CD8-positive, alpha-beta T cell (primary cell): ENCODE measurements at regions of chr3 and their contacts with region 1.

Region 1: DNA sequence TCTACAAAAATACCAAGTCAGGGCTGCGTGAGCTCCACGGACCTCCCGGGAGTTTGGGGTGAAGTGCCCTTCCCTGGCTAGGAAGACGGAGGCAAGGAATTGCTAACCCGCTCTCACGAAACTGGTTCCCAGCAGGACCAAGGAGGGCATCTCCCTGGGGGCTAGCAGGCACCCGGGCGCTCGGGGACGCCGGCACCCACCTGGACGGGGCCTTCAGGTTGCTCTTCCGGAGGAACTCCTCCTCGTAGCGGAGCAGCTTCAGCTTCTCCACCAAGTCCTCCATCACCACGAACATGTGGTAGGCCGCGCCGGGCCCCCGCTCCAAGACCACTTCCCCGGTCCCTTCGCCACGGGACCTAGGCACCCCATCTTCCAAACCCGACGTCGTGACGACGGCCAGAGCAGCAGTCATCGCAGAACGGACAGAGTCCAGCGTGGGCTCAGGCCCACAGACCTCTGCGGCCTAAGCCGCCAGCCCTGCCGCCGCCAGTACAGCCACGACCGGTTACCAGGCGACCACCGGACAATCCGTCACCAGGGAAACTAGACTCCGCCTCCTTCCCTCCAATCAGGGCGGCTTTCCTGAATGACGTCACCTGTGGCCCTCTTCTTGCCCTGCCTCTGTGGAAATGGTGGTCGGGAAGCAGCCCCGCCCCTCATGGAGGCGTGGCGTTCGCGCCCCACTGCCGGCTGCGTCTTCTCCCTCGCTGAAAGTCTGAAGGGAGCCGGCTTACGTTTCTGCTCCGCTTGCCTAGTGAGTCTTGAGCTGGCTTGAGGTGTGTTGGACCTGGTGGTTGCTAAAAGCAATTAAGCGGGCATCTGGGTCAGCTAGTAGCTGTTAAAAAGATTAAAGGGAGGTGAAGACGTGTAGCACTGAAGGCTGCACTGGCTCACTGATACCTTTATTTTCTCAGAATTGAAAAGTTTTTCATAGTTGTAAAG is at the start of gene IFT57:
- DNase-seq: peak; percentile 89 to 99 (median 95)
- ATAC-seq: peak; percentile 94
- H3K4me3 ChIP-seq: peak within 1 kb of the TSS; percentile 73 to 94
- H3K4me3 Mint-ChIP-seq: peak within 1 kb of the TSS; percentile 97
- H3K27ac ChIP-seq: peak within 1 kb of the TSS; percentile 96 to 97
- H3K27ac Mint-ChIP-seq: peak within 1 kb of the TSS; percentile 98
- H3K4me1 ChIP-seq: peaks cover 41% of the 10 kb centered on the region
- H3K4me1 Mint-ChIP-seq: peaks cover 53% of the 10 kb centered on the region
- H3K27me3 ChIP-seq: no peaks in the 10 kb centered on the region
- H3K27me3 Mint-ChIP-seq: no peaks in the 10 kb centered on the region
- CTCF ChIP-seq: no peak
- total RNA-seq, gene IFT57: 45.2 to 55.7 TPM

Region 2: GRCh38 chr3:107522510-107523288 is 699.5 kb before region 1 on chr3 and contains the start of gene BBX:
- CTCF ChIA-PET with region 1: no interaction called
- POLR2A ChIA-PET with region 1: interaction called, 3 read pairs
- intact Hi-C with region 1: loop called (anchors 2 to 10 kb)
- DNase-seq: peak; percentile 83 to 98 (median 91)
- ATAC-seq: peak; percentile 91
- H3K4me3 ChIP-seq: peak within 1 kb of the TSS; percentile 77 to 86
- H3K4me3 Mint-ChIP-seq: peak within 1 kb of the TSS; percentile 99
- H3K27ac ChIP-seq: peak within 1 kb of the TSS; percentile 47 to 69
- H3K27ac Mint-ChIP-seq: peak within 1 kb of the TSS; percentile 99
- H3K4me1 ChIP-seq: peaks cover 19% of the 10 kb centered on the region
- H3K4me1 Mint-ChIP-seq: peaks cover 32% of the 10 kb centered on the region
- H3K27me3 ChIP-seq: no peaks in the 10 kb centered on the region
- H3K27me3 Mint-ChIP-seq: no peaks in the 10 kb centered on the region
- CTCF ChIP-seq: no peak
- total RNA-seq, gene BBX: 71.3 to 77.9 TPM

Region 3: DNA sequence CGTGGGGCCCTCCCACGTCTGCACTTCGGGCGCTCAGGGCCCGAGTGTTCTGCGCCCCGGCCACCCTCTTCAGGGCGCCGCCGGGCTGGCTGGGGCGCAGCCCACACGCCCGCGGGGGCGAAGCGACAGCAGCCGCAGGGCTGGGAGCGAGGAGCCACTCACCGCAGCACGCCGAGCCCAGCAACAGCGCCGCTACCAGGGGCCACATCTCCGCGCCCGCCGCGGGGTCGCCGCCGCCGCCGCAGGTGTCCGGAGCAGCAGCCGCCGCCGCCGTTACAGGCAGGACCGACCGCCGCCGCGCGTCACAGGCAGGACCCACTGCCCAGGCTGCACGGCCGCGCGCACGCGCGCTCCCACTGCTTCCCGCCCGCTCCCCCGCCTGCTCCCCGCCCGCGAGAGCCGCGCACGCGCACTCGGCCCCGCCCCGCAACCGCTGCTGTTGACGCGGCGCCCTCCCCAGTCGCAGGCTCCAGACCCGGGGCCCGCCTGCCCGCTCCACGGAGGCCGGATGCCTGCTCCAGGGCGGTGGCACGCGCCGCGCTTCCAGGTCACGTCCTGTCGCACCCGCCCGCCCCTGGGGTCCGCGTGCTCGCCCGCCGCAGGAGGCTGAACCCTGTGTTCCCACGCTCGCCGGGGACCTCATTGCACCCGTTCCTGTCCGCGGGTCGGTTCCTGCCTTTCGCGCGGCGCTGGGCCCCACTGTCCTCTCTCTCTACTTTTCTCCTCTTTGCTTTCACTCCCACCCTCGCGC is 131.3 kb before region 1 on chr3 and contains the start of gene CD47:
- CTCF ChIA-PET with region 1: no interaction called
- POLR2A ChIA-PET with region 1: interaction called, 46 read pairs
- intact Hi-C with region 1: loop called (anchors 1 kb)
- DNase-seq: peak; percentile 93 to 99 (median 97)
- ATAC-seq: peak; percentile 70
- H3K4me3 ChIP-seq: peak within 1 kb of the TSS; percentile 91 to 93
- H3K4me3 Mint-ChIP-seq: peak within 1 kb of the TSS; percentile 98
- H3K27ac ChIP-seq: peak within 1 kb of the TSS; percentile 93 to 94
- H3K27ac Mint-ChIP-seq: peak within 1 kb of the TSS; percentile 99
- H3K4me1 ChIP-seq: peaks cover 51% of the 10 kb centered on the region
- H3K4me1 Mint-ChIP-seq: peaks cover 39% of the 10 kb centered on the region
- H3K27me3 ChIP-seq: no peaks in the 10 kb centered on the region
- H3K27me3 Mint-ChIP-seq: no peaks in the 10 kb centered on the region
- CTCF ChIP-seq: no peak
- total RNA-seq, gene CD47: 118 to 125 TPM

Region 4: GRCh38 chr3:108250626-108251025 is 28.4 kb after region 1 on chr3:
- CTCF ChIA-PET with region 1: no interaction called
- POLR2A ChIA-PET with region 1: no interaction called
- intact Hi-C with region 1: no loop called
- DNase-seq: no peak
- ATAC-seq: no peak
- H3K4me3 ChIP-seq: no peak overlapping the region
- H3K4me3 Mint-ChIP-seq: no peak overlapping the region
- H3K27ac ChIP-seq: no peak overlapping the region
- H3K27ac Mint-ChIP-seq: no peak overlapping the region
- H3K4me1 ChIP-seq: no peaks in the 10 kb centered on the region
- H3K4me1 Mint-ChIP-seq: no peaks in the 10 kb centered on the region
- H3K27me3 ChIP-seq: no peaks in the 10 kb centered on the region
- H3K27me3 Mint-ChIP-seq: no peaks in the 10 kb centered on the region
- CTCF ChIP-seq: no peak

Region 5: GRCh38 chr3:108292905-108293328 is 70.7 kb after region 1 on chr3:
- CTCF ChIA-PET with region 1: no interaction called
- POLR2A ChIA-PET with region 1: interaction called, 5 read pairs
- intact Hi-C with region 1: loop called in 1 of 2 experiments (anchors 10 kb)
- DNase-seq: peak in 1 of 9 experiments; percentile 27
- ATAC-seq: no peak
- H3K4me3 ChIP-seq: no peak overlapping the region
- H3K4me3 Mint-ChIP-seq: no peak overlapping the region
- H3K27ac ChIP-seq: peak overlapping the region in 1 of 2 experiments; percentile 7
- H3K27ac Mint-ChIP-seq: peak overlapping the region; percentile 80
- H3K4me1 ChIP-seq: peaks cover 24% of the 10 kb centered on the region
- H3K4me1 Mint-ChIP-seq: peaks cover 33% of the 10 kb centered on the region
- H3K27me3 ChIP-seq: no peaks in the 10 kb centered on the region
- H3K27me3 Mint-ChIP-seq: no peaks in the 10 kb centered on the region
- CTCF ChIP-seq: no peak

Region 6: DNA sequence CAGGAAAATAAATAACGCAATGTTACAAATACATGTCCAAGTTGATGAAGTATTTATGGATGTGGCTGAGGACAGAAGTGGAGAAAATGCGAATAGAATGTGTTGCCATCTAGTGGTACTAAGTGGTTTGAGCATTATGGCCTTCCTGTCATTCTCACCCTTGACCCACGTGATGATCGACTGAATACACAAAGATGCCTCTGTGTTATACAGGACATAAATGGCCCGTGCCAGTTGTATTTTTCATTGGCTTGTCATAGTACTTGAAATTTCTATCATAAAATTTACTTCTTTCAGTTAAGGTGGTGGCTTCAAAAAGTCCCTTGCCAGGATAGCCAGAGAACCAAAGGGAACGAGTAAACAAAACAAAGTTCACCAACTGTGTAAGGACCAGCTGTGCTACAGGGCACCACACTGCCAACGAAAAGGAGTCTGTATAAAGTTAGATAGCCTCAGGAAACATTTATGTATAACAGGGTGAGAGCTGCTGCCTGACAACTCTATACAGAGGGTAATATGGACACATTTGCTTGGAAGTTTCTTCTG is 184.6 kb after region 1 on chr3:
- CTCF ChIA-PET with region 1: no interaction called
- POLR2A ChIA-PET with region 1: no interaction called
- intact Hi-C with region 1: loop called in 1 of 2 experiments (anchors 5 kb)
- DNase-seq: peak in 3 of 9 experiments; percentile 22 to 78 (median 55)
- ATAC-seq: peak; percentile 79
- H3K4me3 ChIP-seq: no peak overlapping the region
- H3K4me3 Mint-ChIP-seq: no peak overlapping the region
- H3K27ac ChIP-seq: no peak overlapping the region
- H3K27ac Mint-ChIP-seq: no peak overlapping the region
- H3K4me1 ChIP-seq: no peaks in the 10 kb centered on the region
- H3K4me1 Mint-ChIP-seq: peaks cover 3% of the 10 kb centered on the region
- H3K27me3 ChIP-seq: no peaks in the 10 kb centered on the region
- H3K27me3 Mint-ChIP-seq: no peaks in the 10 kb centered on the region
- CTCF ChIP-seq: peak; percentile 40

Region 7: DNA sequence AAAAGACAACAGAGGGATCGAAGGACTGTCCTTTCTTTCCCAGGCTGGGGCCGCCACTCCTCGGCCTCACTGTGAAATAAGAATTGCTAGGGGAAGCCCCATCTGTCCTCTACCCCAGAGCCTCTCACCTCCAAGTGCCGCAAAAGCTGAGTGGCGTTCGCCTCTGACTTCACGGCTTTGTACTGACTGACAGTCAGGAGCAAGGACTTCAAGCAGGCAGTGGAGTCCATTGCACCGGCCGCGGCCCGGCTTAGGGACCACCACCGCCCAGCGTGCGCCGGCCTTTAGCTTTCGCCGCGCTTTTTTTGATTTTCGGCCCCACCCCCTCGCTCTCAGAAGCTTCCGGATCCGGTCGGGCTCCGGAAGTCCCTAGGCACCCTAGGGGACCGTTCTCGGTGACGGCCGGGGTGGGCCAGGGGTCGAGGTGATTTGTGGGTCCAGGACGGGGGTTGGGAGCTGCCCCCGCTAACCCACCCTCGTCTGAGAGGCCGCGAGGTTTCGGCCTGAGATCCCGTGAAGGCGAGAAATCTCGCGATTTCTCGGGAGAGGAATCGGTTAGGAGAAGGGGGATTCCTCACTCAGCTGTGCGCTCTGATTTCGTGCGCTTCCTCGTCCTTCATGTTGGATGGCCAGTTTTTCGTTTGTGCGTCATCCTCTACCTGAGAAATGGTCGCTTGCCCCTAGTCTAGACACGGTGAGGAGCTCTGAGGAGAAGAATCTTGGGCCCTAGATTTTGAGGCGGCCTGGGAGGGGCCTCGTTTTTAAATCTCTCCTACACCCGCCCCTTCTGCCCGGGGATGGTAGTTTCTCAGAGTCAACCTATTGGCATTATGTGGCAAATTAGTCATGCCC is 367.2 kb after region 1 on chr3 and contains the starts of genes CIP2A and DZIP3:
- CTCF ChIA-PET with region 1: no interaction called
- POLR2A ChIA-PET with region 1: no interaction called
- intact Hi-C with region 1: loop called (anchors 1 to 5 kb)
- DNase-seq: peak; percentile 71 to 96 (median 81)
- ATAC-seq: peak; percentile 79
- H3K4me3 ChIP-seq: peak within 1 kb of the TSS; percentile 90 to 93
- H3K4me3 Mint-ChIP-seq: peak within 1 kb of the TSS; percentile 97
- H3K27ac ChIP-seq: peak within 1 kb of the TSS; percentile 91 to 98
- H3K27ac Mint-ChIP-seq: peak within 1 kb of the TSS; percentile 99
- H3K4me1 ChIP-seq: peaks cover 14% of the 10 kb centered on the region
- H3K4me1 Mint-ChIP-seq: peaks cover 31% of the 10 kb centered on the region
- H3K27me3 ChIP-seq: no peaks in the 10 kb centered on the region
- H3K27me3 Mint-ChIP-seq: no peaks in the 10 kb centered on the region
- CTCF ChIP-seq: no peak
- total RNA-seq, gene CIP2A: 3.0 to 4.2 TPM
- total RNA-seq, gene DZIP3: 8.7 to 9.4 TPM

Region 8: GRCh38 chr3:108728934-108729333 is 506.8 kb after region 1 on chr3:
- CTCF ChIA-PET with region 1: no interaction called
- POLR2A ChIA-PET with region 1: no interaction called
- intact Hi-C with region 1: no loop called
- DNase-seq: no peak
- ATAC-seq: no peak
- H3K4me3 ChIP-seq: no peak overlapping the region
- H3K4me3 Mint-ChIP-seq: no peak overlapping the region
- H3K27ac ChIP-seq: no peak overlapping the region
- H3K27ac Mint-ChIP-seq: no peak overlapping the region
- H3K4me1 ChIP-seq: no peaks in the 10 kb centered on the region
- H3K4me1 Mint-ChIP-seq: no peaks in the 10 kb centered on the region
- H3K27me3 ChIP-seq: no peaks in the 10 kb centered on the region
- H3K27me3 Mint-ChIP-seq: no peaks in the 10 kb centered on the region
- CTCF ChIP-seq: no peak

Region 9: GRCh38 chr3:108862865-108863798 is 641.0 kb after region 1 on chr3:
- CTCF ChIA-PET with region 1: no interaction called
- POLR2A ChIA-PET with region 1: no interaction called
- intact Hi-C with region 1: loop called in 1 of 2 experiments (anchors 10 kb)
- DNase-seq: peak in 6 of 9 experiments; percentile 5 to 56 (median 26)
- ATAC-seq: peak; percentile 70
- H3K4me3 ChIP-seq: no peak overlapping the region
- H3K4me3 Mint-ChIP-seq: no peak overlapping the region
- H3K27ac ChIP-seq: peak overlapping the region in 1 of 2 experiments; percentile 63
- H3K27ac Mint-ChIP-seq: peak overlapping the region; percentile 85
- H3K4me1 ChIP-seq: peaks cover 13% of the 10 kb centered on the region
- H3K4me1 Mint-ChIP-seq: peaks cover 39% of the 10 kb centered on the region
- H3K27me3 ChIP-seq: no peaks in the 10 kb centered on the region
- H3K27me3 Mint-ChIP-seq: no peaks in the 10 kb centered on the region
- CTCF ChIP-seq: no peak